ENCODE measurements at regions of chr16 and their contacts with region 1.

Region 1: GRCh38 chr16:81204798-81205680 is 33.5 kb upstream of the BCO1 start:
- DNase-seq: no peak
- ATAC-seq: peak in 2 of 4 donors; percentile 37 to 65
- H3K4me3 ChIP-seq: no peak overlapping the region
- H3K27ac ChIP-seq: no peak overlapping the region
- H3K4me1 ChIP-seq: no peaks in the 10 kb centered on the region
- H3K27me3 ChIP-seq: no peaks in the 10 kb centered on the region
- CTCF ChIP-seq: peak; percentile 66

Region 2: DNA sequence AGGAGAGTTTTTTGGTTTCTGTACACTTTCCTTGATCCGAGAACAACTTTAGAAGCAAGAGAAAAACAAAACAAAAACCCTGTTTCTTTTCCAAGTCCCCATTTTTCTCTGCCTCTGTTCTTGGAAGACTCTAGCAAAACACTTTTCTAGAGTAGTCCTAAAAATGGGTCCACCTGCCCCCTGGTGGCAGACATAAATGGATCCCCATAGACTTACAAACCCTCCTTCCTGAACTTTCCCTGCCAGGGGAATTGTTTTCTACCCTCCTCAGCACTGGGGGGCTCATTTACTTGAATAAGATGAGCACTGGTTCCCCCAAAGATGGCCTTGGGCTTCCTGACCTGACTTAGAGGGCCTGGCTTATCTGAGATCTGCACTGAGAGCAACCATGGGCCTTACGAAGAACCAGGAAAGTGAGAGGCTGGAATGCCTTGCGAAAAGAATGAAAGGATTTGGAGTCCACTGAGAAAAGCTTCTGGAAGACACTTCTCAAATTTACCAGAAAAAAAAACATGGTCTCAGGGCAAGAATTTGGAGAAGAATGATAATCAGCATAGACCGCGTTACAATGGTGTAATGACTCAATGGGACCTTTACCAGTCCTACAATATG is 352.7 kb before region 1 on chr16:
- intact Hi-C with region 1: no loop called
- DNase-seq: no peak
- ATAC-seq: no peak
- H3K4me3 ChIP-seq: no peak overlapping the region
- H3K27ac ChIP-seq: no peak overlapping the region
- H3K4me1 ChIP-seq: no peaks in the 10 kb centered on the region
- H3K27me3 ChIP-seq: no peaks in the 10 kb centered on the region
- CTCF ChIP-seq: no peak

Region 3: DNA sequence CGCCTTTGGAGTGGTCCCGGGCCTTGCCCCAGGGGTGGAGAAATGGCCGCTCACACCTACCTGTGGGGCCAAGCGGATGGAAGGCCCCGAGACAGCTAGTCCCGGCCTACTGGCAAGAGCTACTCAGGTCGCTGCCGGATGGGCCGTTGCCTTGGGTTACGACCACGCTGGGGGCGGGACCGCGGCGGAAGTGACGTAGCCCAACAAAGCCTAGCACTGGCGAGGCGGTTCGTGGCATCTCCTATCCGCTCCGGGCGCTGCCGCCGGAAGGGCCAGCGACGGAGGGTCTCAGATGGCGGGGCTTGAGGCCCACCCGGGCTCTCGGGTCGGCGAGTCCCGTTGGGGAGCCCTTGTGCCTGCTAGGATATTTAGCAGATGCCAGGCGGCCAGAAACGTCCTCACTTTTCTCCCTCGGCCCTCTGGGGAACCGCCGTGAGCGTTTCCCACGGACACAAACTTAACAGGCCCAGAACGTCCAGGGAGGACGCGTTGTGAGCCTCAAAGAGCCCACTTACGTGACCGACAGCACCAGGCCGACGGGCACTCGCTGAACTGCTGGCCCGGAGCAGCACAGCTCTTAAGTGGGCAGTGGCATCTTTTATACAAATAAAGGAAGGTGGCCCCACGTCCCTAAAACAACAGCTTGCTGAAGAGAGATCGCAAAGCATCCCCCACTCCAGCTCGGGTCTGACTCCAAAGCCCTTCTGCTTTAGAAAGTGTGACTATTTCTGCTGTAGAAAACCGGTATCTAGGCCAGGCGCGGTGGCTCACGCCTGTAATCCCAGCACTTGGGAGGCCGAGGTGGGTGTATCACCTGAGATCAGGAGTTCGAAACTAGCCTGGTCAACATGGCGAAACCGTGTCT is 127.7 kb before region 1 on chr16 and contains the start of gene C16orf46:
- intact Hi-C with region 1: no loop called
- DNase-seq: peak; percentile 97 to 98
- ATAC-seq: peak; percentile 97 to 99 (median 98)
- H3K4me3 ChIP-seq: peak within 1 kb of the TSS; percentile 75
- H3K27ac ChIP-seq: peak within 1 kb of the TSS; percentile 95
- H3K4me1 ChIP-seq: no peaks in the 10 kb centered on the region
- H3K27me3 ChIP-seq: no peaks in the 10 kb centered on the region
- CTCF ChIP-seq: no peak
- total RNA-seq, gene C16orf46: 0.27 to 0.63 (median 0.46) TPM

Region 4: GRCh38 chr16:81314603-81315270 is 109.7 kb after region 1 on chr16 and contains the start of gene GAN:
- intact Hi-C with region 1: loop called (anchors 5 kb)
- DNase-seq: peak; percentile 95 to 96
- ATAC-seq: peak; percentile 98 to 99 (median 98)
- H3K4me3 ChIP-seq: peak within 1 kb of the TSS; percentile 98
- H3K27ac ChIP-seq: peak within 1 kb of the TSS; percentile 95
- H3K4me1 ChIP-seq: peaks cover 20% of the 10 kb centered on the region
- H3K27me3 ChIP-seq: no peaks in the 10 kb centered on the region
- CTCF ChIP-seq: no peak
- total RNA-seq, gene GAN: 5.5 to 8.3 (median 7.2) TPM

Region 5: DNA sequence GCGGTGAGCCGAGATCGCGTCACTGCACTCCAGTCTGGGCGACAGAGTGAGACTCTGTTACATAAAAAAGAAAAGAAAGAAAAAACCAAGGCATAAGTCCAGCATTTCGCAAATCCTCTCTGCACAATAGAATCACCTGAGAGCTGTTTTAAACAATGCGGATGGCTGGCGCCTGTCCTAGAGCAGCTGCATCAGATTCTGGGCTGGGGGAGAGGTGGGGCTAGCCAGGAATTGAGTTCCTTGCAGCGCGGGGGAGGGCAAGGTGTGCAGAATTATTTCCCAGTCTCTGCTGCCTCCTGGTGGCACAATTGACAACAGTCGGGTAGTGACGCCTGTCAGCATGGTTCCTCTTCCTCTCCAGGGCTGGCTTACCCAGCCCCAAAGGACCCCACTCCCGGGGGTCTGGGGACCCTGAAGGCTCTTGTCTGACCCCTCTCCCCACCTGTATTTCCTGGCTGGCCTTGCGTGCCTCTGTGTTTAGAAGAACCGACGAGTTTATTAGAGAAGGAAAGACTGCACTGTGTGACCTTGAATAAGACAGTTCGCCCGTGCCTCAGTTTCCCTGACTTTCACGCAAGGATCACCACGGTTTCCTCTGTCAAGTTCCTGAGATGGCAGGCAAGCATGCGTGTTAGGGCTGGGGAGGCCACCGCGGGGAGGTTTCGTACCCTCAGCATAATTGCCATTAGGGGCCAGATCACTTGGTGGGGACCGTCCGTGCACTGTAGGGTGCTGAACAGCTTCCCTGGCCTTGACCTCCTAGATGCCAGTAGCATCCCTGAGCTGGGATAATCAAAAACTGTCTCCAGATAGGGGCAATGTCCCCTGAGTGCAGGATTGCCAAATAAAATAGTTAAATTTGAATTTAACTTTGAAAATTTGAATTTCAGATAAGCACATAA is 533.1 kb after region 1 on chr16:
- intact Hi-C with region 1: loop called in 1 of 2 experiments (anchors 5 kb)
- DNase-seq: peak; percentile 69 to 77
- ATAC-seq: peak; percentile 74 to 89 (median 82)
- H3K4me3 ChIP-seq: no peak overlapping the region
- H3K27ac ChIP-seq: no peak overlapping the region
- H3K4me1 ChIP-seq: no peaks in the 10 kb centered on the region
- H3K27me3 ChIP-seq: no peaks in the 10 kb centered on the region
- CTCF ChIP-seq: peak; percentile 72